ENCODE measurements at regions of chr11 and their contacts with region 1.

Region 1: GRCh38 chr11:86182976-86183584 is 61.5 kb upstream of the EED start:
- DNase-seq: no peak
- H3K4me3 ChIP-seq: no peak overlapping the region
- CTCF ChIP-seq: no peak
- POLR2A ChIP-seq: no peak

Region 2: DNA sequence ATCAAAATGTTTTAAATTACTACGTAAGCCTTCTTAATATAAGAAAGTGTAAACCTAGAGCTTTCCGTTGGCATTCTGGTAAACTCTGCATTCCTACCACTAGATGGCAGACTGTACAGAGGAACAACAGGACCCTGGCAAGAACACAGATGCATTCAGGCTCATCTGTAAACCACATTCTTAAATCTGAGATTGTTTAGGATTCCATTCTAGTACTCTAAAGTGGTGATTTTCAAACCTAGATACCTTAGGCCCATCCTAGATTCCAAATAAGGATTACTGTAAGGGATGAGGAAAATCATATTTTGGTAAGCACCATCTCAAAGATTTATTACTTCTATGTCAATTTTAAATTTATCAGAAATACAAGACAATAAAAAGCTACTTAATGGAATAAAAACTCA is 141.1 kb before region 1 on chr11:
- intact Hi-C with region 1: loop called (anchors 10 kb)
- DNase-seq: peak in 1 of 2 donors; percentile 85
- H3K4me3 ChIP-seq: no peak overlapping the region
- CTCF ChIP-seq: peak in 1 of 3 donors; percentile 73
- POLR2A ChIP-seq: no peak

Region 3: GRCh38 chr11:86230921-86231430 is 47.9 kb after region 1 on chr11:
- intact Hi-C with region 1: no loop called
- DNase-seq: no peak
- H3K4me3 ChIP-seq: no peak overlapping the region
- CTCF ChIP-seq: no peak
- POLR2A ChIP-seq: no peak